ENCODE measurements at regions of chr9 and their contacts with region 1.

Region 1: DNA sequence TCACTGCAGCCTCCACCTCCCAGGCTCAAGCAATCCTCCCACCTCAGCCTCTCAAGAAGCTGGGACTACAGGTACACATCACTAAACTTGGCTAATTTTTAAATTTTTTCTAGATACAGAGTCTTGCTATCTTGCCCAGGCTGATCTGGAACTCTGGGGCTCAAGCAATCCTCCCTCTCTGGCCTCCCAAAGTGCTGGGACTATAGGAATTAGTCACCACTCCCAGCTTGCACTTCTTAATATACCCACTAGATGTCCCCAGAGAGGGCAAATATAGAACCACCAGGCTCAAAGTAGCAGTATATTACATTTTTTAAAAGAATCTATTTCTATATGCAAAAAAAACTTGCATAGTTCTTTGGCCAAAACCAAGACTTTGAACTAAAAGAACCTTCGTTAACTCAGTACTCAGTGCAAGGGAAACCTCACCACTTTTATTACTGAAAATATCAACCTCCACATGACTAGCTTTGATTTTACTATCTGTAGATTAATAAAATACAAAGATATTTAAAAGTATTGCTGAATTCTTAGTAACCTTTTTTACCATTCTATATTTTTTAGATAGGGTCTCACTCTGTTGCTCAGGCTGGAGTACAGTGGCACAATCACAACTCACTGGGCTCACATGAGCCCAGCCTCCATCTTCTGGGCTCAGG is 25.8 kb upstream of the HSD17B3 start:
- DNase-seq: peak; percentile 33
- H3K4me3 ChIP-seq: no peak overlapping the region
- H3K27ac ChIP-seq: no peak overlapping the region
- H3K27me3 ChIP-seq: no peaks in the 10 kb centered on the region
- CTCF ChIP-seq: peak; percentile 83

Region 2: GRCh38 chr9:96317335-96317980 is 10.4 kb before region 1 on chr9:
- CTCF ChIA-PET with region 1: interaction called, 27 read pairs
- POLR2A ChIA-PET with region 1: no interaction called
- DNase-seq: peak; percentile 32
- H3K4me3 ChIP-seq: no peak overlapping the region
- H3K27ac ChIP-seq: no peak overlapping the region
- H3K27me3 ChIP-seq: no peaks in the 10 kb centered on the region
- CTCF ChIP-seq: peak; percentile 98

Region 3: GRCh38 chr9:96338299-96338698 is 10.5 kb after region 1 on chr9:
- CTCF ChIA-PET with region 1: interaction called, 17 read pairs
- POLR2A ChIA-PET with region 1: no interaction called
- DNase-seq: no peak
- H3K4me3 ChIP-seq: no peak overlapping the region
- H3K27ac ChIP-seq: no peak overlapping the region
- H3K27me3 ChIP-seq: no peaks in the 10 kb centered on the region
- CTCF ChIP-seq: no peak

Region 4: GRCh38 chr9:96344458-96345180 is 16.8 kb after region 1 on chr9:
- CTCF ChIA-PET with region 1: interaction called, 17 read pairs
- POLR2A ChIA-PET with region 1: no interaction called
- DNase-seq: peak; percentile 87
- H3K4me3 ChIP-seq: no peak overlapping the region
- H3K27ac ChIP-seq: no peak overlapping the region
- H3K27me3 ChIP-seq: no peaks in the 10 kb centered on the region
- CTCF ChIP-seq: no peak

Region 5: GRCh38 chr9:96663506-96664120 is 335.8 kb after region 1 on chr9:
- CTCF ChIA-PET with region 1: interaction called, 67 read pairs
- POLR2A ChIA-PET with region 1: no interaction called
- DNase-seq: no peak
- H3K4me3 ChIP-seq: no peak overlapping the region
- H3K27ac ChIP-seq: no peak overlapping the region
- H3K27me3 ChIP-seq: no peaks in the 10 kb centered on the region
- CTCF ChIP-seq: no peak

Measured in AG04450 (cell line).